A673 (cell line): ENCODE measurements at regions of chr12 and their contacts with region 1.

Region 1: GRCh38 chr12:43208627-43209026 is 343.4 kb downstream of the ADAMTS20 start:
- DNase-seq: no peak
- H3K4me3 ChIP-seq: no peak overlapping the region
- H3K27ac ChIP-seq: no peak overlapping the region
- H3K4me1 ChIP-seq: no peaks in the 10 kb centered on the region
- H3K27me3 ChIP-seq: no peaks in the 10 kb centered on the region
- CTCF ChIP-seq: no peak

Region 2: GRCh38 chr12:43238281-43238680 is 29.7 kb after region 1 on chr12:
- CTCF ChIA-PET with region 1: no interaction called
- POLR2A ChIA-PET with region 1: no interaction called
- intact Hi-C with region 1: loop called (anchors 5 kb)
- DNase-seq: no peak
- H3K4me3 ChIP-seq: no peak overlapping the region
- H3K27ac ChIP-seq: no peak overlapping the region
- H3K4me1 ChIP-seq: no peaks in the 10 kb centered on the region
- H3K27me3 ChIP-seq: no peaks in the 10 kb centered on the region
- CTCF ChIP-seq: no peak

Region 3: GRCh38 chr12:43914923-43915468 is 706.4 kb after region 1 on chr12:
- CTCF ChIA-PET with region 1: no interaction called
- POLR2A ChIA-PET with region 1: no interaction called
- intact Hi-C with region 1: no loop called
- DNase-seq: peak; percentile 32
- H3K4me3 ChIP-seq: no peak overlapping the region
- H3K27ac ChIP-seq: no peak overlapping the region
- H3K4me1 ChIP-seq: no peaks in the 10 kb centered on the region
- H3K27me3 ChIP-seq: no peaks in the 10 kb centered on the region
- CTCF ChIP-seq: peak; percentile 65